ENCODE measurements at regions of chr6 and their contacts with region 1.

Region 1: GRCh38 chr6:43769526-43770416 is at the start of gene VEGFA:
- DNase-seq: peak; percentile 62 to 93
- H3K4me3 ChIP-seq: peak within 1 kb of the TSS; percentile 86 to 97
- H3K27ac ChIP-seq: peak within 1 kb of the TSS; percentile 86 to 98
- H3K4me1 ChIP-seq: peaks cover 10 to 23% of the 10 kb centered on the region in 2 donors
- H3K27me3 ChIP-seq: no peaks in the 10 kb centered on the region
- CTCF ChIP-seq: peak; percentile 97 to 99 (median 97)
- total RNA-seq, gene VEGFA: 110 TPM

Region 2: GRCh38 chr6:43608310-43608763 is 161.4 kb before region 1 on chr6:
- intact Hi-C with region 1: no loop called
- DNase-seq: peak in 1 of 2 donors; percentile 80
- H3K4me3 ChIP-seq: no peak overlapping the region
- H3K27ac ChIP-seq: no peak overlapping the region
- H3K4me1 ChIP-seq: no peaks in the 10 kb centered on the region
- H3K27me3 ChIP-seq: no peaks in the 10 kb centered on the region
- CTCF ChIP-seq: peak; percentile 35 to 76 (median 71)

Region 3: GRCh38 chr6:43667245-43668150 is 102.3 kb before region 1 on chr6:
- intact Hi-C with region 1: loop called (anchors 2 kb)
- DNase-seq: peak; percentile 38 to 90
- H3K4me3 ChIP-seq: peak overlapping the region in 1 of 2 donors; percentile 35
- H3K27ac ChIP-seq: peak overlapping the region; percentile 62 to 79
- H3K4me1 ChIP-seq: peaks cover 22 to 29% of the 10 kb centered on the region in 2 donors
- H3K27me3 ChIP-seq: no peaks in the 10 kb centered on the region
- CTCF ChIP-seq: peak; percentile 91 to 98 (median 95)

Region 4: DNA sequence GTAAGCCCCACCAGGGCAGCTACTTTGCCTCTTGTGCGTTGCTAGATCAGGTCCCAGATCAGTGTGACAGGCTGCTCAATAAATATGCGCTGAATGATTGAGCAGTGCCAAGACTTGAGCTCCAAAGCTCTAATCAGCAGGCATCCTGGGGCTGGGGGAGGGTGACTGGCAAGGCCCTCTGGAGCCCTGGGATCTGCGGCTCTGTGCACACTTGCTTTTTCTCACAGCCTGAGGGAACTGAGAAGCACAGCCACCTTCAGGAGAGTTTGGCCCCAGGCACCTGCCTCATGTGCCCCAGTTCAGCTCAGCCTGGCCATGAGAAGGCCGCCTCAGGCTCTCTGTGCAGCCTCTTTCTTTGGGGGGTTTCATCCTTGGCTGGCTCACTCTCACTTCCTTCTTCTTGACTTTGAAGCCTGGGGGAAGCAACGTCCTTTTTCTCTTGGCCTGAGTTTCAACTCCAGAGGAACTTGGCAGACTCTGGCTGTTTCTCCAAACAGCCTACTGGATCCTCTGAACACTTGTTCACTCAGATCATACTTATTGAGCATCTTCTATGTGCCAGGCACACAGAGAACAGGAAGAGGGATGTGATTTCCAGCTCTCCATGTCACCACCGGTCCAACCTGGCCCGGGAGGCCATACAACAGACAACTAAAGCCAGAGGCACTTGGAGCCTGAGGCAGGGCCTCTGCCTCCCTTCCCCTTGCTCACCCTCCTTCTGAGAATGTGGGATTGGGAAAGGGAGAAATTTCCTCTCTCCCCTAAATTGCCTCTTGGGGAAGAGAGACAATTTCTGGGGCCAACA is 114.3 kb after region 1 on chr6:
- intact Hi-C with region 1: no loop called
- DNase-seq: no peak
- H3K4me3 ChIP-seq: no peak overlapping the region
- H3K27ac ChIP-seq: no peak overlapping the region
- H3K4me1 ChIP-seq: no peaks in the 10 kb centered on the region
- H3K27me3 ChIP-seq: no peaks in the 10 kb centered on the region
- CTCF ChIP-seq: no peak

Region 5: DNA sequence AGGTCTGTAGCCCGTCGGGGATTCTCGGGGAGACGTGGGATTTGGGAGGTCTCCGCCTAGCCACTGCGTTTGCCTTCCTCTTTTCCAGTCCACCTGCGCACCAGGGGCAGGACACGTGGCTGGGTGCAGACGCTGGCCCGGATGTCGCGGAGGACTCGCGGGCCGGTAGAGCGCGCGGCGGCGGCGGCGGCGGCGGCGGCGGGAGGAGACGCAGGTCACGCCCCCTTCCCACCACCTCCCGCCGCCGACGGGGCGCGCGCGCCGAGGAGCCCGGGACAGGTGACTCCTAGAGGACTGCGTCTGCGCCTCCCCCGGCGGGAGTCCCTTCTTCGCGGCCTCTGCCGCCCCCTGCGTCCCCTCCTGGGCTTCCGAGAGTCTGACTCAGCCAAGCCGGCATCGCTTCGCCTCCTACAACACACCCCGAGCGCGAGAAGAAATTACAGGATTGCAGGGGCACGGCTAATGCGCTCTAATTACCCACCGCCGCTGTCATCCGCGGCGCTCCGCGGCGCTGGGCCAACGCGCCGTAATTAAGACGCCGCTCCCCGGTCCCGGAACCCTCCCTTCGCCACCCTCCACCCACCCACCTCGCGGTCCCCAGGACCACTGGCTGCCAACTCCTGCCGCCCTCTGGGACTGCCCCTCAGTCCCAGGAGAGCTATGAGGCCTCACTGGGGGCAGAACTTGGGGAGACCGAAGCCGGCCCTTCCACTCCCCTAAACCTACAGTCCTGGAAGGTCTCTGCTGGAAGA is 233.0 kb after region 1 on chr6:
- intact Hi-C with region 1: loop called (anchors 5 kb)
- DNase-seq: peak in 1 of 2 donors; percentile 72
- H3K4me3 ChIP-seq: peak overlapping the region; percentile 48 to 49
- H3K27ac ChIP-seq: no peak overlapping the region
- H3K4me1 ChIP-seq: peaks cover 4% of the 10 kb centered on the region in 2 donors
- H3K27me3 ChIP-seq: peaks cover 4% of the 10 kb centered on the region
- CTCF ChIP-seq: peak; percentile 3 to 39 (median 7)

Region 6: GRCh38 chr6:44074439-44075136 is 304.8 kb after region 1 on chr6:
- intact Hi-C with region 1: loop called (anchors 1 kb)
- DNase-seq: peak in 1 of 2 donors; percentile 83
- H3K4me3 ChIP-seq: peak overlapping the region in 1 of 2 donors; percentile 71
- H3K27ac ChIP-seq: peak overlapping the region in 1 of 2 donors; percentile 54
- H3K4me1 ChIP-seq: peaks cover 4 to 26% of the 10 kb centered on the region in 2 donors
- H3K27me3 ChIP-seq: no peaks in the 10 kb centered on the region
- CTCF ChIP-seq: peak; percentile 85 to 94 (median 86)

Region 7: GRCh38 chr6:44387346-44388133 is 617.8 kb after region 1 on chr6 and contains the start of gene CDC5L:
- intact Hi-C with region 1: loop called (anchors 2 kb)
- DNase-seq: peak; percentile 91 to 99
- H3K4me3 ChIP-seq: peak within 1 kb of the TSS; percentile 70 to 94
- H3K27ac ChIP-seq: peak within 1 kb of the TSS; percentile 89 to 91
- H3K4me1 ChIP-seq: peaks cover 0 to 17% of the 10 kb centered on the region in 2 donors
- H3K27me3 ChIP-seq: no peaks in the 10 kb centered on the region
- CTCF ChIP-seq: no peak
- total RNA-seq, gene CDC5L: 10.9 TPM

Measured in ascending aorta (tissue), 2 donors.